GM12878 (cell line): ENCODE measurements at regions of chr7 and their contacts with region 1.

Region 1: DNA sequence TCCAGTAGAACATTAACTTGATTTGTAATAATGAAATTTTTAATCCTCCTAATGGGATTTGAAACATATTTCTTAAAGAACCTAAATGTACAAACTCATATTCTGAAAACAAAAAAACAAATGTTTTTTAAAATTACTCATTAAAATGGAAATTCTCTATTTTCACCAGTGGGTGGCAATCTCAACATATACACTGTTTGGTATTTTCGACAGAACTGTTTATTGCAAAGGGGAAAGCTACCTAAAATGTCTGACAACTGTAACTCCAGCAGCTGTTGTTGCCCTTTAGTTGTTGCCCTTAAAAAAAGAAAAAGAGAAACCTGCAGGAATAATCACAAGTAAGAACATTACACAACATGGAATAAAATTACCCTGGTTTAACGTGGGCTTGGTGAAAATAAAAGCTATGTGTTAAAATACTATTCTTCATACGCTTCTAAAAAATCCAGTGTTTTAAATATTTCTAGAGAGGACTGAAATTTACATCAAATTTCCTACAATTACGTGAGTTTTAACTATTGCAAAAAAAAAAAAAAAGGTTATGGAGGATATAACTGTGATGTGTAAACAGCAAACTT is 54.5 kb downstream of the COL1A2 start:
- DNase-seq: peak; percentile 8
- ATAC-seq: peak; percentile 68
- H3K4me3 ChIP-seq: no peak overlapping the region
- H3K27ac ChIP-seq: no peak overlapping the region
- H3K4me1 ChIP-seq: no peaks in the 10 kb centered on the region
- H3K27me3 ChIP-seq: no peaks in the 10 kb centered on the region; a peak in 1 of 4 replicates
- CTCF ChIP-seq: peak; percentile 47 to 61 (median 52); a peak in 5 of 6 replicates
- EP300 ChIP-seq: no peak
- POLR2A ChIP-seq: no peak
- RAD21 ChIP-seq: peak; percentile 94

Region 2: GRCh38 chr7:94348142-94348541 is 101.1 kb before region 1 on chr7:
- CTCF ChIA-PET with region 1: no interaction called
- POLR2A ChIA-PET with region 1: no interaction called
- RAD21 ChIA-PET with region 1: no interaction called
- SMC1A ChIA-PET with region 1: no interaction called
- in situ Hi-C with region 1: no loop called
- intact Hi-C with region 1: no loop called
- DNase-seq: no peak
- ATAC-seq: no peak
- H3K4me3 ChIP-seq: no peak overlapping the region
- H3K27ac ChIP-seq: no peak overlapping the region
- H3K4me1 ChIP-seq: no peaks in the 10 kb centered on the region
- H3K27me3 ChIP-seq: peaks cover 0 to 5% of the 10 kb centered on the region in 2 experiments; a peak in 2 of 4 replicates
- CTCF ChIP-seq: no peak
- EP300 ChIP-seq: no peak
- POLR2A ChIP-seq: no peak
- RAD21 ChIP-seq: no peak

Region 3: GRCh38 chr7:94382132-94382531 is 67.1 kb before region 1 on chr7:
- CTCF ChIA-PET with region 1: no interaction called
- POLR2A ChIA-PET with region 1: no interaction called
- RAD21 ChIA-PET with region 1: no interaction called
- SMC1A ChIA-PET with region 1: no interaction called
- in situ Hi-C with region 1: no loop called
- intact Hi-C with region 1: no loop called
- DNase-seq: no peak
- ATAC-seq: no peak
- H3K4me3 ChIP-seq: no peak overlapping the region
- H3K27ac ChIP-seq: no peak overlapping the region
- H3K4me1 ChIP-seq: no peaks in the 10 kb centered on the region
- H3K27me3 ChIP-seq: no peaks in the 10 kb centered on the region
- CTCF ChIP-seq: no peak
- EP300 ChIP-seq: no peak
- POLR2A ChIP-seq: no peak
- RAD21 ChIP-seq: no peak

Region 4: DNA sequence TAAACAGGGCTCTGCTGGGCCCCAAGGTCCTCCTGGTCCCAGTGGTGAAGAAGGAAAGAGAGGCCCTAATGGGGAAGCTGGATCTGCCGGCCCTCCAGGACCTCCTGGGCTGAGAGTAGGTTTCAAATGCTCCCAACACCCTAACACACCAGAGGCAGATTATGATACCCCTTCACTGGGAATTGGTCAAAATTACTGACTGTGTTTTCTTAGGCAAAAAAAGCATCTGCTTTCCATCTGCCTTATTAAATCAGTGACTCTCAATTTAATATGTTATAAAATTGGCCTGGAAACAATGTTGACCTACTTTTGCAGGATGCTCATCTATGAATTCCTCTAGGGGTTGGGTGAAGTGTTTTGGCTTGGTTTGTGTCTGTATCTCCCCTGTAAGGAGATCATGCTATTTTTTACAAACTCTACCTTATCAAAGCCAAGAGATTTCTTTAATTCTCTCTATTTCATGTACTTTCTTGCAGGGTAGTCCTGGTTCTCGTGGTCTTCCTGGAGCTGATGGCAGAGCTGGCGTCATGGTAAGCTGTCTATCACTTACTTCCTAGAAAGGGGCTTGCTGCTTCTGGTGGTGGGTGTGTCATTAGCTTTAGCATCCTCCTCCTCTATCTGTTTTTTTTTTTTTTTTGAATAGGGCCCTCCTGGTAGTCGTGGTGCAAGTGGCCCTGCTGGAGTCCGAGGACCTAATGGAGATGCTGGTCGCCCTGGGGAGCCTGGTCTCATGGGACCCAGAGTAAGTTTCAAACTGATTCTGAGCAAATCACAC is 38.6 kb before region 1 on chr7:
- CTCF ChIA-PET with region 1: no interaction called
- POLR2A ChIA-PET with region 1: no interaction called
- RAD21 ChIA-PET with region 1: no interaction called
- SMC1A ChIA-PET with region 1: no interaction called
- in situ Hi-C with region 1: no loop called
- intact Hi-C with region 1: no loop called
- DNase-seq: no peak
- ATAC-seq: no peak
- H3K4me3 ChIP-seq: no peak overlapping the region
- H3K27ac ChIP-seq: no peak overlapping the region
- H3K4me1 ChIP-seq: no peaks in the 10 kb centered on the region
- H3K27me3 ChIP-seq: no peaks in the 10 kb centered on the region; a peak in 1 of 4 replicates
- CTCF ChIP-seq: no peak
- EP300 ChIP-seq: no peak
- POLR2A ChIP-seq: no peak
- RAD21 ChIP-seq: no peak

Region 5: GRCh38 chr7:94436018-94436604 is 13.1 kb before region 1 on chr7:
- CTCF ChIA-PET with region 1: interaction called, 46 read pairs
- POLR2A ChIA-PET with region 1: no interaction called
- RAD21 ChIA-PET with region 1: interaction called, 9 read pairs
- SMC1A ChIA-PET with region 1: interaction called, 8 read pairs
- in situ Hi-C with region 1: no loop called
- intact Hi-C with region 1: no loop called
- DNase-seq: peak; percentile 7
- ATAC-seq: peak; percentile 98
- H3K4me3 ChIP-seq: no peak overlapping the region
- H3K27ac ChIP-seq: no peak overlapping the region
- H3K4me1 ChIP-seq: no peaks in the 10 kb centered on the region
- H3K27me3 ChIP-seq: no peaks in the 10 kb centered on the region; a peak in 1 of 4 replicates
- CTCF ChIP-seq: peak; percentile 75 to 83 (median 76); a peak in 5 of 6 replicates
- EP300 ChIP-seq: no peak
- POLR2A ChIP-seq: no peak
- RAD21 ChIP-seq: peak; percentile 58

Region 6: GRCh38 chr7:94649450-94649849 is 200.2 kb after region 1 on chr7:
- CTCF ChIA-PET with region 1: interaction called, 45 read pairs
- POLR2A ChIA-PET with region 1: no interaction called
- RAD21 ChIA-PET with region 1: interaction called, 9 read pairs
- SMC1A ChIA-PET with region 1: interaction called, 57 read pairs
- in situ Hi-C with region 1: no loop called
- intact Hi-C with region 1: no loop called
- DNase-seq: no peak
- ATAC-seq: peak; percentile 85
- H3K4me3 ChIP-seq: peak overlapping the region; percentile 18; the same call in 1 of the 2 replicates
- H3K27ac ChIP-seq: no peak overlapping the region
- H3K4me1 ChIP-seq: peaks cover 2% of the 10 kb centered on the region; the same call in 1 of the 2 replicates
- H3K27me3 ChIP-seq: no peaks in the 10 kb centered on the region
- CTCF ChIP-seq: no peak
- EP300 ChIP-seq: no peak
- POLR2A ChIP-seq: no peak
- RAD21 ChIP-seq: no peak

Region 7: DNA sequence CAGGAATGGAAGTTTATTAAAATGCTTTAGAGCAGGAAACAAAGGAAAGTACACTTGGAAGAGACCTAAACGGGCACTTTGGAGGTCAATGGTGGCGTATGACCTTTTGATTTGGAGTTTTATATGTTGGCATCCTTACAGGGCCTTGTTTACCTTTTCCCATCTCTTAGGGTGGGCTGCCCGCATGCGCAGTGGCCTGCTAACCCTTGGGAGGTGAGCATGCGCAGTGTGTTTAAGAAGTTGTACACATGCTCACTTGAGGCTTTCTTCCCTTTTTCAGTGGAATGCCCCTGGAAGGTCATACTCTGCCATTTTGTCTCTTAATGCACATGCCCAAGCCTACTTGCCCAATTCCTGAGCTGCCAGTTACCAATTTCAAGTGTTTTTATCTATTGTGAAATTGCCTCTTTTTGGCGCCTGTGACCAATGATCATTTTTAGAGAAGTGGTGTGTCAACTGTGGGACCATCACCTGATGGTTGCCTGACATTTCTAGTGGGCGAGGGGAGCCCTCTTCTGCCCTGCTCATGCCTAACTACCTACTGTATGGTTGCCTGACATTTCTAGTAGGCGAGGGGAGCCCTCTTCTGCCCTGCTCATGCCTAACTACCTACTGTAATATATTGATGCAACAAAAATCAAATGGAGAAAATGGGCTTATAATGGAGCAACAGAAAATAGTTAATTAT is 596.1 kb after region 1 on chr7:
- CTCF ChIA-PET with region 1: interaction called, 40 read pairs
- POLR2A ChIA-PET with region 1: no interaction called
- RAD21 ChIA-PET with region 1: interaction called, 22 read pairs
- SMC1A ChIA-PET with region 1: interaction called, 26 read pairs
- in situ Hi-C with region 1: no loop called
- intact Hi-C with region 1: loop called (anchors 10 kb)
- DNase-seq: no peak
- ATAC-seq: peak; percentile 76
- H3K4me3 ChIP-seq: no peak overlapping the region
- H3K27ac ChIP-seq: no peak overlapping the region
- H3K4me1 ChIP-seq: no peaks in the 10 kb centered on the region
- H3K27me3 ChIP-seq: no peaks in the 10 kb centered on the region
- CTCF ChIP-seq: peak in 1 of 3 experiments; percentile 30; a peak in 2 of 6 replicates
- EP300 ChIP-seq: no peak
- POLR2A ChIP-seq: no peak
- RAD21 ChIP-seq: peak; percentile 48; the same call in 1 of the 2 replicates

Region 8: GRCh38 chr7:95246831-95247370 is 797.7 kb after region 1 on chr7:
- CTCF ChIA-PET with region 1: interaction called, 32 read pairs
- POLR2A ChIA-PET with region 1: no interaction called
- RAD21 ChIA-PET with region 1: interaction called, 36 read pairs
- SMC1A ChIA-PET with region 1: interaction called, 21 read pairs
- in situ Hi-C with region 1: no loop called
- intact Hi-C with region 1: loop called (anchors 2 kb)
- DNase-seq: peak; percentile 5
- ATAC-seq: peak; percentile 91
- H3K4me3 ChIP-seq: no peak overlapping the region
- H3K27ac ChIP-seq: no peak overlapping the region
- H3K4me1 ChIP-seq: no peaks in the 10 kb centered on the region
- H3K27me3 ChIP-seq: no peaks in the 10 kb centered on the region
- CTCF ChIP-seq: peak; percentile 57 to 75 (median 65)
- EP300 ChIP-seq: no peak
- POLR2A ChIP-seq: no peak
- RAD21 ChIP-seq: peak; percentile 82

Region 9: DNA sequence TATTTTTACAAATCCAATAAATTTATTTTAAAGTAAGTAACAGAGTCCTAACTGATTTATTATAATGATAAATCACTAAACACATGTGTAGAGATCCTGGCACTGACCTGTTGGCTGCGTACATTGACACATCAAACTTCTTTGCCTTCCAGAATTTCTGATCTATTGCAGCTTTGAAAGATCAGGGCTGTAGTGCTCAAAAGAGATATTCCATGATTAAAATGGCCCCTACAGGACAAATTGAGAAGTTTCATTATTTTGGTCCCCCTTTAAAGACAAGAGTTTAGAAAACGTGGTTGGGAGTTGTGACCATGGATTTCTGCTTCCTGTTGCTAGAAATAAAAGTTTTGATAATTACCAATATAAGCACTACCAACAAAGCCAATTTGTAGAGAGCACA is 1234.8 kb after region 1 on chr7:
- CTCF ChIA-PET with region 1: interaction called, 66 read pairs
- POLR2A ChIA-PET with region 1: no interaction called
- RAD21 ChIA-PET with region 1: interaction called, 61 read pairs
- SMC1A ChIA-PET with region 1: interaction called, 33 read pairs
- in situ Hi-C with region 1: loop called (anchors 25 kb)
- intact Hi-C with region 1: loop called (anchors 5 kb)
- DNase-seq: no peak
- ATAC-seq: peak; percentile 67
- H3K4me3 ChIP-seq: no peak overlapping the region
- H3K27ac ChIP-seq: no peak overlapping the region
- H3K4me1 ChIP-seq: no peaks in the 10 kb centered on the region
- H3K27me3 ChIP-seq: no peaks in the 10 kb centered on the region; a peak in 1 of 4 replicates
- CTCF ChIP-seq: peak; percentile 21 to 37 (median 26); a peak in 3 of 6 replicates
- EP300 ChIP-seq: no peak
- POLR2A ChIP-seq: no peak
- RAD21 ChIP-seq: peak; percentile 52